ENCODE measurements at regions of chr12 and their contacts with region 1.

Region 1: GRCh38 chr12:55738123-55739024 is 4.5 kb upstream of the GDF11 start:
- DNase-seq: peak; percentile 90
- ATAC-seq: peak; percentile 77
- H3K4me3 Mint-ChIP-seq: peak overlapping the region; percentile 81
- H3K27ac Mint-ChIP-seq: peak overlapping the region; percentile 86
- H3K4me1 Mint-ChIP-seq: peaks cover 31% of the 10 kb centered on the region
- H3K27me3 Mint-ChIP-seq: peaks cover 2% of the 10 kb centered on the region; the same call in 1 of the 2 replicates
- CTCF ChIP-seq: peak; percentile 73

Region 2: DNA sequence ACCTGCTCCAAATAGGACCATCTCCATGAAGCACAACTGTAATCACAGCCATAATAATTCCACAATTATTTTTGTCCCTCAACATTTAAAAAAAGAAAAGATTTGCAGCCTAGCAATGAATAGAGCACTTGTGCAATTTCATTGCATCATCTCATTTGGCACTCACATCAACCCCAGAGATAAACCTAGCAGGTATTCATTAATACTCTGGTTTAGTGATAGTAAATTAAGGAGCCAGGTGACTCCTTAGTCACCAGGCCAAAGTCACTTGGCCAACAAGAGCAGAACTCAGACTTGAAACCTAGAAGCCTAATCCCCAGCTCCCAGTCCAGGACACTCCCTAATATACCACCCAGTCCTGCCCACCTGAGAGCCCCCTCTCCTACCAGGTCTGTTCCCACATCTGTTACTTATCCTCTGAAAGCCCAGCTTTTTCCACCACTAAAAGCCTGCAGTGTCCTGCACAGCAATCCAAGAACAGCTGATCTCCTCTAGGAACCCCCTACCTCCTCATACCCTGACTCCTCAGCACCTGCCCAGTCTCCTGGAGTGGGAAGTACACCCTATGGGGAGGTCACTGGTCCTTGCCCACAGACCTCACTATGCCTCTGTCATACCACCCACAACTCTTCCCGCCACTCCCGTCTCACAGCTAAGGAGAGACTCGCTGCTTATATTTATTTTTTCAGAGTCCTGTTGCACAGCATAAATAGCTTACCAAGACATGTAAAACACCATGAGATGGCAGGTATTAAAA is 79.6 kb before region 1 on chr12:
- CTCF ChIA-PET with region 1: interaction called, 19 read pairs
- POLR2A ChIA-PET with region 1: no interaction called
- DNase-seq: no peak
- ATAC-seq: no peak
- H3K4me3 Mint-ChIP-seq: no peak overlapping the region
- H3K27ac Mint-ChIP-seq: no peak overlapping the region
- H3K4me1 Mint-ChIP-seq: no peaks in the 10 kb centered on the region
- H3K27me3 Mint-ChIP-seq: peaks cover 9% of the 10 kb centered on the region
- CTCF ChIP-seq: no peak

Region 3: DNA sequence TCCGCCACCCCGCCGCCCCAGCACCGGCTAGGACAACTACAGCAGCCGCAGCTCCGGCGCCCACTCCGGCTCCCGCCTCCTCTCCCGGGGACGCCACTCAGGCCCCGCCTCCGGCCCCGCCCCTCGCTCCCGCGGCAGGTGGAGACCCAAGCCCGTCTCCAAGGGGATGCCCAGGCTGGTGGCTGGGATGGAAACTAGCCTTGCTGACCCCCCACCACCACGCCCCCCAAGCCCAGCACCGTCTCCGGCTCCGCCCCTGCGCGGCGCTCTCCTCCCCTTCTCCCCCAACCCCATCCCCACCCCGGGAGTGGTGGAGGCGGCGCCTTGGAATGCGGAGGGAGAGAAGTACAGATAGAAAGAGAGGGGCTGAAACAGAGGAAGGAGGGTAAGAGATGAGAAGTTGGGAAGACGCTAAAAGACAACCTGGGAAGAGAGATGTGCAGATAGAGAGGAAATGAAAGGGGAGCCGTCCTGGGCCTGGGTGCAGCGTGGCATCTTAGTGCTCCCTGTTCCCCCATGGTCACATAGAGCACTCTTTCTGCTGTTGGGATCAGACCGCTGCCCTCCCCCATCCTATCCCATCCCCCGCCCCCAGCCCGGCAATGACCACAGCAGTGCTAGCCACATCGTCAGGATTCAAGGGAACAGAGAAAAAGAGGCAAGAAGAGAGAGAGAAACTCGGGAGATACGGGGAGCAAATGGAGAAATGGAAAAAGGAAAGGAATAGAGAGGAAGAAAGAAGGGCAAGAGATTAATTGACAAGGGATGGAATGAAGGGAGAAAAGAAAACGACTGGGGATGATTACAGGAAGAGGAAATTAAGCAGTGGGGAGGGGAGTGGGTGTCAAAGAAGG is 30.3 kb before region 1 on chr12 and contains the start of gene ITGA7:
- CTCF ChIA-PET with region 1: interaction called, 84 read pairs
- POLR2A ChIA-PET with region 1: no interaction called
- DNase-seq: peak; percentile 97
- ATAC-seq: peak; percentile 85
- H3K4me3 Mint-ChIP-seq: peak within 1 kb of the TSS; percentile 88
- H3K27ac Mint-ChIP-seq: peak within 1 kb of the TSS; percentile 91
- H3K4me1 Mint-ChIP-seq: peaks cover 36% of the 10 kb centered on the region
- H3K27me3 Mint-ChIP-seq: peaks cover 44% of the 10 kb centered on the region
- CTCF ChIP-seq: no peak
- total RNA-seq, gene ITGA7: 77.8 to 96.2 TPM (median 80.4 TPM) in 3 replicates

Region 4: GRCh38 chr12:55765736-55766290 is 27.4 kb after region 1 on chr12:
- CTCF ChIA-PET with region 1: interaction called, 20 read pairs
- POLR2A ChIA-PET with region 1: no interaction called
- DNase-seq: no peak
- ATAC-seq: no peak
- H3K4me3 Mint-ChIP-seq: no peak overlapping the region
- H3K27ac Mint-ChIP-seq: peak overlapping the region; percentile 64
- H3K4me1 Mint-ChIP-seq: peaks cover 7% of the 10 kb centered on the region
- H3K27me3 Mint-ChIP-seq: no peaks in the 10 kb centered on the region
- CTCF ChIP-seq: no peak

Region 5: DNA sequence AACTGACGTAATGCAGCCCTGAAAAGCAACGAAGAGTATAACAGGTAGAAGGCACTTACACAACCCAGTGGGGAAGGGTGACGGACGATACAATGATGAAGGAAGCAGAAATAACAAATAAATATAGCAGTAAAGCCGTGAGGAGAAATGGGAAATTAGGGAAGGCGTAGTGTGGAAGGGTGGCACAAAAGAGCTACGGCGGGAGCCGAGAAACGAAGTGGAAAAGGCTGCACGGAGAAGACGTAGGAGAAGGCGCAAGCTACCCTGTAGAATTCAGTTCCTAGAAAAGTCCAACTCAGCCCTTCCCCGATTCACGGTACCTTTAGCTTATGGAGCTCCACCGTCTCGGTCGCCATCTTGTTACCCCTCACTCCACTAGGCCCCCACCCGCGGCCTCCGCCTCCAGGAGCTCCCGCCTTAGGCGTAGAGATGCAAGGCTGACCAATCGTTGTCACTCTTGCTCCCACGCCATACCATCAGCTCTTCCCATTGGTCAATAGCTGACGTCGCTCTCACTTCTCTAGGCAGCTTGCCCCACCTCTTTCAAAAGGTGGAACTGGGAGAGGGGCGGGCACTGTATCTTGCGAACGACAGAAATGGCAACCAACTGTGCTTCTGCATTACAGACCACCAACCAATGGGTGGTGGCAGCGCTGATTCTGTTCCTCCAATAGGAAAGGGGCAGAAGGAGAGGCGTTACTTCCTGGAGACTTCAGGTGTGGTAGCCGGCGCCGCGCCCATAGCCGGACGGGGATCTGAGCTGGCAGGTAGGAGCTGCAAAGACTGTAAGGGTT is 79.2 kb after region 1 on chr12 and contains the starts of genes ORMDL2 and SARNP:
- CTCF ChIA-PET with region 1: interaction called, 97 read pairs
- POLR2A ChIA-PET with region 1: interaction called, 16 read pairs
- DNase-seq: peak; percentile 96
- ATAC-seq: peak; percentile 96
- H3K4me3 Mint-ChIP-seq: no peak within 1 kb of the TSS; the same call in none of the 2 replicates
- H3K27ac Mint-ChIP-seq: no peak within 1 kb of the TSS; the same call in 1 of the 2 replicates
- H3K4me1 Mint-ChIP-seq: peaks cover 39% of the 10 kb centered on the region
- H3K27me3 Mint-ChIP-seq: no peaks in the 10 kb centered on the region
- CTCF ChIP-seq: no peak
- total RNA-seq, gene ORMDL2: 32.9 to 37.9 TPM (median 34.8 TPM) in 3 replicates
- total RNA-seq, gene SARNP: 98.3 to 102 TPM (median 100 TPM) in 3 replicates

Region 6: GRCh38 chr12:55940065-55940732 is 201.8 kb after region 1 on chr12:
- CTCF ChIA-PET with region 1: interaction called, 33 read pairs
- POLR2A ChIA-PET with region 1: no interaction called
- DNase-seq: peak; percentile 92
- ATAC-seq: peak; percentile 94
- H3K4me3 Mint-ChIP-seq: peak overlapping the region; percentile 10; the same call in 1 of the 2 replicates
- H3K27ac Mint-ChIP-seq: no peak overlapping the region
- H3K4me1 Mint-ChIP-seq: peaks cover 9% of the 10 kb centered on the region
- H3K27me3 Mint-ChIP-seq: peaks cover 17% of the 10 kb centered on the region
- CTCF ChIP-seq: peak; percentile 74

Region 7: DNA sequence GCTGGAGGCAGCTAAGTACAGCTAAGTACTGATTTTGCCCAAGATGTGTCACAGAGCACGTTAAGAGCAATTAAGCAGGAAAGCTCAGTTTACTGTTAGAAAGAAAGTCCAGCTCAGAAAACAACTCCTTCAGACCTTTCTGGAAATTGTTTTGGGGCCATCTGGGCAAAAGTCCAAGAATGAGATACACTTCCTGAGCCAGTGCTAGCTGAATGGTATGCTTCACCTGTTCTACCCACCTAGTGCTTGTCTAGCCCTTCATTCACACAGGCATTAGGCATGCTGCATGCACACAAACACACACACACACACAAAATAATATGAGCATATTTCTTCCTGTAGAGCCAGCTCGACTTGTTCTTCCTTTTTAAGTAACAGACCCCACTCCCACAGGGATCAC is 275.8 kb after region 1 on chr12:
- CTCF ChIA-PET with region 1: no interaction called
- POLR2A ChIA-PET with region 1: no interaction called
- DNase-seq: no peak
- ATAC-seq: no peak
- H3K4me3 Mint-ChIP-seq: no peak overlapping the region
- H3K27ac Mint-ChIP-seq: peak overlapping the region; percentile 66; the same call in 1 of the 2 replicates
- H3K4me1 Mint-ChIP-seq: 0 out of 2 replicates have a peak, but pooled peaks cover under 1% of the 10 kb centered on the region
- H3K27me3 Mint-ChIP-seq: no peaks in the 10 kb centered on the region
- CTCF ChIP-seq: no peak

Region 8: GRCh38 chr12:56029666-56030293 is 291.4 kb after region 1 on chr12:
- CTCF ChIA-PET with region 1: interaction called, 29 read pairs
- POLR2A ChIA-PET with region 1: no interaction called
- DNase-seq: peak; percentile 50
- ATAC-seq: peak; percentile 82
- H3K4me3 Mint-ChIP-seq: no peak overlapping the region
- H3K27ac Mint-ChIP-seq: no peak overlapping the region
- H3K4me1 Mint-ChIP-seq: no peaks in the 10 kb centered on the region
- H3K27me3 Mint-ChIP-seq: no peaks in the 10 kb centered on the region
- CTCF ChIP-seq: peak; percentile 54